ENCODE measurements at regions of chr11 and their contacts with region 1.

Region 1: DNA sequence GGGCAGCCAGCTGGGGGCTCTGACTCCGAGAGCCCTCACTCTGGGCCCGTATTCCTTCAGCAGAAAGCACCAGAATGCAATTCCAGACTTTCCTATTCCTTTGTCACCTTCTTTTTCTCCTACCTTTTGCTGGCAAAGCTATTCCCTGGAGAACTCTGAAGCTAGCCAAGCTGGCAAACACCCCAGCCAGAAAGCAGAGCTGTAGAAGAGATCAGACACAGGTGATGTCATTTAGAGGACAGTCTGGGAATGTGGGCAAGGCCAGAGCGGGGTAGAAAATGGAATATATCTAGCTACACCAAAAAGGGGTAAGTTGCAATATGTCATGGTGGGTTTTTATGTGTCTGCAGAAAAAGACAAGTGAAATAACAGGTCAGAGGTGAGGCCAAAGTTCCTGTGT is 205.1 kb downstream of the NXPE2 start:
- DNase-seq: no peak
- H3K4me3 ChIP-seq: no peak overlapping the region
- H3K27ac ChIP-seq: no peak overlapping the region
- H3K4me1 ChIP-seq: no peaks in the 10 kb centered on the region
- H3K27me3 ChIP-seq: no peaks in the 10 kb centered on the region
- CTCF ChIP-seq: no peak

Region 2: DNA sequence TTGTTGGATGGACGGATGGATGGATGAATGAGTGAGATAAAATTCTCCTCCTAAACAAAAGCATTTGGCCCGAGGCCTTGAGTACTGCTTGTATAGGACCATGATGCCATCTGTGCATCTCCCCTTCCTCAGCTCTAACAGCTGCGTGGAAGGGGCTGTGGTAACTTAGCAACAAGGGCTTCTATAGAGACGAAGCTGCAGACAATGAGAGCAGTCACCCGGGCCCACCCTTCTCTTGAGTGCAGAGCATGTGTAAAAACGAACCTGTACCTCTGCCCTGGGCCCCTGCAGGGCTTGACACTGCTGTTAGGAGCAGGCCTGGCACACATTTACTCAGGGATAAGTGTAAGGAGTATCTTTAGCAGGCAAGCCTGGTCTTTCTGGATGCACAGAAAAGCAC is 229.3 kb after region 1 on chr11:
- CTCF ChIA-PET with region 1: interaction called, 12 read pairs
- POLR2A ChIA-PET with region 1: no interaction called
- intact Hi-C with region 1: no loop called
- DNase-seq: no peak
- H3K4me3 ChIP-seq: no peak overlapping the region
- H3K27ac ChIP-seq: no peak overlapping the region
- H3K4me1 ChIP-seq: no peaks in the 10 kb centered on the region
- H3K27me3 ChIP-seq: no peaks in the 10 kb centered on the region
- CTCF ChIP-seq: no peak

Region 3: DNA sequence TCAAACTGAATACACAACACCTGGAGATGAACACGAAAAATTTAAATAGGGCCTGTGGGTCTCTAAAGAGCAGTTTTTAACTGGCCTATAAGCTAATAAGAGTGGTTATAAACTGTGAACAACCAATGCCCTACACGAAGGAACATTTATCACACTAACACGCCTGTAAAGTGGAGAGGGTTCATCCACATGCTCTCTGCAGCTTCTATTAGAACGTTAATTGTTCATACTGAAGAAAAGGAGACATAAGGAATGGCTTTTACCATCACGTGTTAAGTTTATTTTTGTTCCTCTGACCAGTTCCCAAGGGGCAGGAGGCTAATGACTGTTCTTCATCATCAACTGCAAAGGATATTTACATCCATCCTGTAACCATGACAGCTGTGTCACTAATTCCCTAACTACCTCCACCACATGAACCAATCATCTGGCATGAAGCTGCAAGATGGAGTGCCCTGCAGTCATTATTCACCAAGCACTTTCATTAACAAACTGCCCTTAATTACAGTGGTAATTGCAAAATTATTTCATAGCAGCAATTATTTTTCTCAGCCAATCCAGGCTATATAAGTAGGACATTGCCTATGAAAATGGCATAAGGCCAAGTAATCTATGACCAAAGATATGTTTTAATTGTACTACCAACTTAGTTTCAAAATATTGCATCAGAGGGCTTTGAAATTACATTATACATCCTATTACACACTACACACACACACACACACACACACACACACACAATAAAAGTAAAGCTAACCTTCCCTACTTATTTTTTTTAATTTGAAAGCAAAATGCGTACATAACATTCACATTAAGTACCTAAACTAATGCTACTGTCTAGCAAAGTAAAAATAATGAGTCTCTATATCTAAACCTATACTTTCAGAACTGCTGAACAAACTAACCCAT is 434.1 kb after region 1 on chr11:
- CTCF ChIA-PET with region 1: no interaction called
- POLR2A ChIA-PET with region 1: no interaction called
- intact Hi-C with region 1: no loop called
- DNase-seq: no peak
- H3K4me3 ChIP-seq: no peak overlapping the region
- H3K27ac ChIP-seq: no peak overlapping the region
- H3K4me1 ChIP-seq: no peaks in the 10 kb centered on the region
- H3K27me3 ChIP-seq: peaks cover 6% of the 10 kb centered on the region
- CTCF ChIP-seq: no peak

Measured in A673 (cell line).